ENCODE measurements at regions of chr2 and their contacts with region 1.

Region 1: GRCh38 chr2:240143801-240144648 is 3.6 kb upstream of the OTOS start:
- DNase-seq: peak; percentile 55 to 81 (median 76)
- H3K4me3 ChIP-seq: no peak overlapping the region
- H3K27ac ChIP-seq: no peak overlapping the region
- H3K4me1 ChIP-seq: peaks cover 0 to 3% (median 0%) of the 10 kb centered on the region in 4 experiments
- H3K27me3 ChIP-seq: peaks cover 0 to 8% (median 2%) of the 10 kb centered on the region in 5 experiments

Region 2: GRCh38 chr2:240060977-240061591 is 82.9 kb before region 1 on chr2:
- CTCF ChIA-PET with region 1: interaction called, 161 read pairs
- POLR2A ChIA-PET with region 1: no interaction called
- DNase-seq: peak; percentile 46 to 74 (median 66)
- H3K4me3 ChIP-seq: no peak overlapping the region
- H3K27ac ChIP-seq: no peak overlapping the region
- H3K4me1 ChIP-seq: no peaks in the 10 kb centered on the region
- H3K27me3 ChIP-seq: peaks cover 10 to 45% (median 11%) of the 10 kb centered on the region in 5 experiments

Region 3: DNA sequence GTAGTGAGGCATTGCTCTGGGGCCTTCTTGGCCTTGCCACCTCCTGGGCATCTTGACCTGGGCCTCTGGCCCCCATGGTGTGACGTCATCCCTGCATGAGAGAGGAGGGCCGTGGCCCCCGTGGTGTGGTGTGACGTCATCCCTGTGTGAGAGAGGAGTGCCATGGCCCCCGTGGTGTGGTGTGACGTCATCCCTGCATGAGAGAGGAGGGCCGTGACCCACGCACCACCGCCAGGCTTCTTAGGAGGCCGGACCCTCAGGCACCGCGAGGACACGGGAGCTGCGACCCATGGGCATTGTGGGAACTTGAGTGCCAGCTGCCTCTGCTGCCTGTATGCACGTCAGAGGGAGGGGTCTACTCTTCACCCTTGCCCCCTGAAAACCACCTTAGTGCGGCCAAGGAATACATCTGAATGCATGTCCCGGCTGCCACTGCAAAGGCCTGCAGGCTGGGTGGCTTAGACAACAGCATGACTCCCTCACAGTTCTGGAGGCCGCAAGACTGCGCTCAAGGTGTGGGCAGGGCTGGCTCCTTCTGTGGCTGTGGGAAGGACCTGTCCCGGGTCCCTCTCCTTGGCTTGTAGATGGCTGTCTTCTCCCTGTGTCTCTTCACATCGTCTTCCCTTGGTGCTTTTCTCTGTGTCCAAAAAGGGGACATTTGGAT is 17.2 kb after region 1 on chr2:
- CTCF ChIA-PET with region 1: no interaction called
- POLR2A ChIA-PET with region 1: no interaction called
- DNase-seq: no peak
- H3K4me3 ChIP-seq: no peak overlapping the region
- H3K27ac ChIP-seq: no peak overlapping the region
- H3K4me1 ChIP-seq: no peaks in the 10 kb centered on the region
- H3K27me3 ChIP-seq: peaks cover 0 to 6% (median 0%) of the 10 kb centered on the region in 5 experiments